Activated CD4-positive, alpha-beta memory T cell treated with anti-CD3 and anti-CD28 coated beads for 36 hours (primary cell): ENCODE measurements at regions of chr3 and their contacts with region 1.

Region 1: DNA sequence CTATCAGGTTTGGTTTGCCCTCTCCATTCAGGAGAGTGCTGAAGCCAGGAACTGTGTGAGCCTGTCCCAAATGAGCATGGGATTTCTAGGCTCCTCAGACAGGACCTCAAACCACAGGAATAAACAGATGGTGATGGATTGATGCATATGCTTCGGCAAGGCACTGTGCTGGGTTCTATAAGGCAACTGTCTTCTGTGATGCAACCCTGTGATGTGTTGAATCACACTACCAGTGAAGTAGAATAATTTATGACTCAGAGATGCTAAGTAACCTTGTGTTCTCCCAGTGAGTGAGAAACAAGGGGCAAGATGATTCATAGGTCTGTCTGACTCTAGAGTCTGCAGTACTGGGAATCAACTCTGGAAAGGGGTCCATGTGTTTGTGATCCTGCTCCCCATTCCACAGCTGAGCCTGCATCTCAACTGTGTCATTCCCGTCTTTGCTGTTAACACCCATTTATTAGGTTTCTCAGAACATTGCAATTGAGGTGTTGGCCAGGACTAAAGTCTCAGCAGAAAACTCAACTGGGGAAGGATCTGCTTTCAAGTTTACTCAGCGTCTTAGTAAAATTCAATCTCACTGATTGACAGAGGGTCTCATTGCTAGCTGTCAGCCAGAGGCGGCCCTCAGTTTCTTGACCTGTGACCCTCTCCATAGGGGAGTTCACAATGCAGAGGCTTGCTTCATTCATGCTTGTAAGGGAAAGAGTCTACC is 510.1 kb upstream of the CFAP20DC start:
- DNase-seq: peak; percentile 50
- H3K4me3 Mint-ChIP-seq: no peak overlapping the region
- H3K27ac Mint-ChIP-seq: peak overlapping the region; percentile 80
- H3K4me1 Mint-ChIP-seq: peaks cover 31% of the 10 kb centered on the region
- H3K27me3 Mint-ChIP-seq: peaks cover 5% of the 10 kb centered on the region

Region 2: GRCh38 chr3:59469948-59470723 is 89.7 kb before region 1 on chr3:
- CTCF ChIA-PET with region 1: no interaction called
- POLR2A ChIA-PET with region 1: no interaction called
- intact Hi-C with region 1: loop called (anchors 1 kb)
- DNase-seq: peak; percentile 70
- H3K4me3 Mint-ChIP-seq: no peak overlapping the region
- H3K27ac Mint-ChIP-seq: peak overlapping the region; percentile 71
- H3K4me1 Mint-ChIP-seq: peaks cover 22% of the 10 kb centered on the region
- H3K27me3 Mint-ChIP-seq: no peaks in the 10 kb centered on the region

Region 3: GRCh38 chr3:59526999-59527398 is 32.9 kb before region 1 on chr3:
- CTCF ChIA-PET with region 1: interaction called, 3 read pairs
- POLR2A ChIA-PET with region 1: no interaction called
- intact Hi-C with region 1: loop called (anchors 1 kb)
- DNase-seq: no peak
- H3K4me3 Mint-ChIP-seq: no peak overlapping the region
- H3K27ac Mint-ChIP-seq: peak overlapping the region; percentile 0
- H3K4me1 Mint-ChIP-seq: peaks cover 15% of the 10 kb centered on the region
- H3K27me3 Mint-ChIP-seq: peaks cover 2% of the 10 kb centered on the region

Region 4: DNA sequence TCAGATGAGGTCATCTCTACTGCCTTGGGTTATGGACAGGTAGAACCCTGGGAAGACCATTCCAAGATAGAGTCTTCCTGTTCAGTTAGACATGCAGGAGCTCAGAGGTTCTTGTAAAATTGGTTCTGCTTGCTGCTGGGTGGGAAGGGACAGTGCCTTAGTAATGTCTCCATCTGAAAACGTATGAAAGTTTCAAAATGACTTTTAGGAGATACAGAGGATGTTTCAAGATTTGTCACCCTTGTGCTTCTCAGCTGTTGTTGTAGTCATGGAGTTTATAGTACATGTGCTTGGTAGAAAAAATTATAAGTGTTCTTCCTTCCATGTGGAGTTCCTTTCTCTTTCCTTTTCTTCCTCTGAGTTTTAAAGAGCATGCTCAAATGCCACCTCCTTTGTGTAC is 375.1 kb after region 1 on chr3:
- CTCF ChIA-PET with region 1: no interaction called
- POLR2A ChIA-PET with region 1: no interaction called
- intact Hi-C with region 1: loop called (anchors 10 kb)
- DNase-seq: peak; percentile 29
- H3K4me3 Mint-ChIP-seq: peak overlapping the region; percentile 8
- H3K27ac Mint-ChIP-seq: peak overlapping the region; percentile 74
- H3K4me1 Mint-ChIP-seq: peaks cover 53% of the 10 kb centered on the region
- H3K27me3 Mint-ChIP-seq: no peaks in the 10 kb centered on the region

Region 5: DNA sequence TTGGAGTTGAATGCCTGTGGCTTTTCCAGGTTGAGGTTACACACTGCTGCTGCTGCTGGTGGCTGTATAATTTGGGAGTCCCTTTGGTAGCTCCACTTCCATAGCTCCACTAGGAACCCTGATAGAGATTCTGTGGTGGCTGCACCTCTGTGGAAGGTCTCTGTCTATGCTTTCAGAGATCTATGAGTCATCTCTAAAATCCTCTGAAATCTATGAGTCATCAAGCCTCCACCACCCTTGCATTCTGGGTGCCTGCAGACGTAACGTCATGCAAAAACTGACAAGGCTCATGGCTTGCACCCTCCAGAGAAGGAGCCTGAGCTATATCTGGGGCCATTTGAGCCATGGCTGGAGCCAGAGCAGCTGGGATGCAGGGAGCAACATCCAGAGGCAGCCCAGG is 526.9 kb after region 1 on chr3:
- CTCF ChIA-PET with region 1: no interaction called
- POLR2A ChIA-PET with region 1: no interaction called
- intact Hi-C with region 1: loop called (anchors 10 kb)
- DNase-seq: peak; percentile 68
- H3K4me3 Mint-ChIP-seq: no peak overlapping the region
- H3K27ac Mint-ChIP-seq: peak overlapping the region; percentile 73
- H3K4me1 Mint-ChIP-seq: peaks cover 43% of the 10 kb centered on the region
- H3K27me3 Mint-ChIP-seq: no peaks in the 10 kb centered on the region